ENCODE measurements at regions of chr5 and their contacts with region 1.

Region 1: GRCh38 chr5:107555450-107556090 is 115.2 kb downstream of the EFNA5 start:
- DNase-seq: no peak
- H3K4me3 Mint-ChIP-seq: no peak overlapping the region
- H3K27ac Mint-ChIP-seq: no peak overlapping the region
- H3K4me1 Mint-ChIP-seq: no peaks in the 10 kb centered on the region
- H3K27me3 Mint-ChIP-seq: peaks cover 2% of the 10 kb centered on the region

Region 2: DNA sequence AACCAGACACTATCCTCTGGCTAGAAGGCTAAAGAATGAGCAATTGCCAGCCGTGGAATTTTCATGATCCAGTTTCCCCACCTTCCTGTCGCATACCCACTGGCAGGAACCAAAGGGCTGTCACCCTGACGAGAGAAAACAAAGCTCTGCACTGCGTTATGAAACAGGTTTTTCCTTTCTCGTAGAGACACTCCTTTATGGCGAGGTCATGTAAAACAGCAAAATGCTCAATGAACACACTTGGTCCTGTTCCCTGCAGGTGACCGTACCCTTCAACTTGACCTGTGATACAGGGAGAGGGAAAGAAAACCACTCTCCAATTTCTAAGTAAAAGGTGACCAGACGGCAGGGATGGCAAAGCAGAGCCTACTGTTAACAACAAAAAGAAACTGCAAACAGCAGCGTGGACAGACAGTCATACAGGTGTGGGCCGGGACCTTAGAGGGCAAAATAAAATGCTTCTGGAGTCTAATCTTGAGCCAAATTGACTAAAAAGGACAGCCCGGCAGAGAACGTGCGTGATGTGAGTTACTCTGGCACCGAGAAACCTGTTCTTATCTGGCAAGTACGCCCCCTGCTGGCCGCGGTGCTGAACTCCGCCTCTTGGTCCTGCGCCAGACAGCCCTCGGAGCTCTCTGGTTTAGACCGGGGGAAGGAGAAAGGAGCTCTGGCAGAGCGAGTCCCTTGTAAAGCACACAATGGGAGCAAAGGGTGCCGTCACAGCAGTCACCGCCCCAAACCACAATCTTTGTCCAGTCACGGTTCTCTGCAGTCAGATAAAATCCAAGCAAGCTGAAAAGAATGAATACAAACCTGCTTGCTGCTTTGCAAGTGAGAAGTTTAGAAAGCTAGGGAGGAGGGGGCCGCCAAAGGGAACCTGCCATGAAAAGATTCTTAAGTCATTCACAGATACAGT is 16.3 kb after region 1 on chr5:
- CTCF ChIA-PET with region 1: interaction called, 10 read pairs
- POLR2A ChIA-PET with region 1: no interaction called
- DNase-seq: peak; percentile 86
- H3K4me3 Mint-ChIP-seq: peak overlapping the region; percentile 65
- H3K27ac Mint-ChIP-seq: no peak overlapping the region
- H3K4me1 Mint-ChIP-seq: peaks cover 17% of the 10 kb centered on the region
- H3K27me3 Mint-ChIP-seq: peaks cover 9% of the 10 kb centered on the region

Region 3: GRCh38 chr5:107869438-107870115 is 314.0 kb after region 1 on chr5:
- CTCF ChIA-PET with region 1: no interaction called
- POLR2A ChIA-PET with region 1: no interaction called
- DNase-seq: no peak
- H3K4me3 Mint-ChIP-seq: no peak overlapping the region
- H3K27ac Mint-ChIP-seq: no peak overlapping the region
- H3K4me1 Mint-ChIP-seq: no peaks in the 10 kb centered on the region
- H3K27me3 Mint-ChIP-seq: no peaks in the 10 kb centered on the region

Measured in activated CD4-positive, alpha-beta memory T cell treated with anti-CD3 and anti-CD28 coated beads, Interleukin-2, amount 10 ng/mL, durations not matched to agents 7 days and 5 days (primary cell).